ENCODE measurements at regions of chr9 and their contacts with region 1.

Region 1: GRCh38 chr9:83937911-83938323 is 16.7 kb upstream of the KIF27 start:
- DNase-seq: no peak
- H3K4me3 ChIP-seq: no peak overlapping the region
- H3K27ac ChIP-seq: peak overlapping the region in 1 of 8 donors; percentile 22
- H3K4me1 ChIP-seq: peaks cover 0 to 39% (median 7%) of the 10 kb centered on the region in 6 donors
- H3K27me3 ChIP-seq: no peaks in the 10 kb centered on the region
- CTCF ChIP-seq: peak; percentile 53 to 85 (median 69)
- POLR2A ChIP-seq: no peak

Region 2: GRCh38 chr9:84163052-84163650 is 225.2 kb after region 1 on chr9:
- intact Hi-C with region 1: no loop called
- DNase-seq: no peak
- H3K4me3 ChIP-seq: no peak overlapping the region
- H3K27ac ChIP-seq: no peak overlapping the region
- H3K4me1 ChIP-seq: no peaks in the 10 kb centered on the region
- H3K27me3 ChIP-seq: peaks cover 0 to 5% (median 0%) of the 10 kb centered on the region in 7 donors
- CTCF ChIP-seq: no peak
- POLR2A ChIP-seq: no peak

Region 3: DNA sequence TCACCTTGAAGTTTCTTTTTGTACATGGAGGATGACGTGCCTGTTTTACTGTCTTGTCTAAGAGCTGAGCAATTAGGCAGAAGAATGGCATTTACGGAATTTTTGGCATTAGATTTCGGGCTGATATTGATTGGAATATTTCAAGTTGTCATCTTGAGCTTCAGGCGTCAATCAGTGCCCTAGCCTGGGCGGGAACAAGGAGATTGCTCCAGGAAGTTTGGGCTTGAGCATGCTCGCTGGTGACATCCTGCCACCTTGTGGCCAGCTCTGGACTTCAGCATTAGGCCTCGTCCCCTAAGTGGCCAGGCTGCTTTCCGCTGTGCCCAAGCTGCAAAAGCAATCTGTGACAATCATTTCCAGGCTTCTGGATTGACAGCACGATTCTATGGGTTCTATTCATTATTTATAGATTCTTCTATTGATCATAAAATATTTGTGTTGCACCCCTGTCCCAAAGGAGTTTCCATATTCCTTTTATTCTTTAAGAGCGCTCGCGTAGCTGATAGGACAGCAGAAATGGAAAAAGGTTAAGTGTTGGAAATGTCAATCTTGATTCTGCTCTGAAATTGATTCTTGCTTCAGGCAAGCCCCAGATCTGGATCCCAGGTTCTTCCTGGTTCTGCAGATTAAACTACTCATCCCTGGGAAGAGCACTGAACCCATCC is 323.3 kb after region 1 on chr9:
- intact Hi-C with region 1: loop called (anchors 5 kb)
- DNase-seq: peak; percentile 91
- H3K4me3 ChIP-seq: peak overlapping the region in 2 of 8 donors; percentile 2 to 50
- H3K27ac ChIP-seq: no peak overlapping the region
- H3K4me1 ChIP-seq: peaks cover 0 to 18% (median 6%) of the 10 kb centered on the region in 6 donors
- H3K27me3 ChIP-seq: peaks cover 0 to 9% (median 0%) of the 10 kb centered on the region in 7 donors
- CTCF ChIP-seq: peak; percentile 63 to 91 (median 86)
- POLR2A ChIP-seq: no peak

Region 4: DNA sequence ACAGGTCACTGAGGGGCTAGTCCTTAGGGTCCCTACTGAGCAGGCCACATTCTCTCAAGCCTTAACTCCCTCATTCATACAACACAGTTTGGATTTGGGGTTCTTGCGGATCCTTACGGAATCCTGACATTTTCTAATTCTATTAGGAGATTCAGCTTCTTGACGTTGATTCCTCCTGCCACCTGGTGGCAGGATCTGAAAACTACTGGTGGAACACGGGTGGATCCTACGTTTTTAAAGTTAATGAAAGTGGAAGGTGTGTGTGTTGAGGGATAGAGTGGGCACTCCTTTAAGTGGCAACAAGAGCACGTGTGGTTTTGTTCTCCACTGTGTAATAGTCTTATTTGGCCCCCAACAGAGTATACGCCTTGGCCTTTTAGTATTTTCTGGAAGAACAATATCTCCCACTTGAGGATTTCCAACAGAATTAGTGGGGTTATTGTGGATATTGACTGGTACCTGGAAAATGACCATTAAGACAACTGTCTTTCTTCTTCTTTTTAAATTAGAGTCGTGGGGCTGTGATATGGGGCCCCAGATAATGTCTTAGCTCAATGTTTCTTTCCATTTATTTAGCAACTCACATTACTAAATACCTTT is 377.5 kb after region 1 on chr9:
- intact Hi-C with region 1: loop called (anchors 5 kb)
- DNase-seq: no peak
- H3K4me3 ChIP-seq: peak overlapping the region in 1 of 8 donors; percentile 15
- H3K27ac ChIP-seq: no peak overlapping the region
- H3K4me1 ChIP-seq: peaks cover 0 to 25% (median 10%) of the 10 kb centered on the region in 6 donors
- H3K27me3 ChIP-seq: no peaks in the 10 kb centered on the region
- CTCF ChIP-seq: peak; percentile 51 to 86 (median 78)
- POLR2A ChIP-seq: no peak